ENCODE measurements at regions of chr9 and their contacts with region 1.

Region 1: DNA sequence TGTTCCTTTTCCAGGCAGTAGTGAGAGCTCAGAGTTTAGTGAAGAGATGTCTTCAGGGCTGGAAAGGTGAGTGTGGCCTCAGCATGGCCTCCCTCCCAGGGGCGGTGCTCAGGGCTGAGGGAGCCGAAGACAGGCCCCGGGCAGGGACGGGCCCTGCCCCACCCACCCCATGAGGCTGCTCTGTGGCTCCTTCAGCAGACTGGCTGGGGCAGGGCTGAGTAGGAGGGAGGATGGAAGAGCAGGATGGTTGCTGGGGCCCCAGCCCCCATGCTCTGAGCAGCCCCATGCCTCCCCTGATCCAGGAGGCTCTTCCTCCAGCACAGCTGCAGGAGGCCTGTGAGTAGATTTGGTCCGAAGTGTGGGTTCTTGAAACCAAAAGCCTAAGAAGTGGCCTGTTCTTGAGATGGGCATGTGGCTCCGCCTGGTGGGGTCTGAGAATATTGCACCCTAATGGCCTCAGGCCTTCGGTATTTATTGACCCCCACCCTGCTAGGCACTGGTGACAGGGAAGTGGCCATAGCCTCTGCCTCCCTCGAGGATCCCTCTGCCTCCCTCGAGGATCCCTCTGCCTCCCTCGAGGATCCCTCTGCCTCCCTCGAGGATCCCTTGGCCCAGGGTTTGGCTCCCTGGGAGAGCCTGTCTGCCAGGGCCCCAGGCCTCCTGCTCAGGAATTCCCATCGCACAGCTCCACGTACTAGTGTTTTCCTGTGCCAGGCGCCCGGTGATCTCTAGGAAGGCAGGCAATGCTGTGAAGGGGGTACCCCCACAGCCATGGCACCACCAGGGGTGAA is 65.4 kb upstream of the GARNL3 start:
- DNase-seq: peak; percentile 81
- ATAC-seq: peak; percentile 66 to 81

Region 2: DNA sequence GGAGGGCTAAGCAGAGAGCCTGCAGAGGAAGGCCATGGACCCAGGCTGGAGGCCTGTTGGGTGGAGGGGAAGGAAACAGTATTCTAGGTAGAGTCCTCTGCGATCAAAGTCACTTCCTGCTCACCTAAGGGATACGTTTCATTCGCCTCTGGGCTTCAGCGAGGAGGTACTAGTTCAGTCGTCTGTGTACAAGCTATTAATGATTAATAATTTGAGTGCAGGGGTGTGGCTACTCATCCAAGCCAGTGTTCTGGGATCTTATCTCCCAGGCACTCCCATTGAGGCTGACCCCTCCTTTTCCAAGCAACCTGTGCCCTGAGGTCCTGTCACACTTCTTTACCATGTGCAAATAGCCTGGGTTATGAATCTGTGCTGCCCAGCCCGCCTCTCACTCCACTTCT is 259.4 kb before region 1 on chr9:
- intact Hi-C with region 1: loop called (anchors 1 to 2 kb)
- DNase-seq: no peak
- ATAC-seq: no peak

Region 3: DNA sequence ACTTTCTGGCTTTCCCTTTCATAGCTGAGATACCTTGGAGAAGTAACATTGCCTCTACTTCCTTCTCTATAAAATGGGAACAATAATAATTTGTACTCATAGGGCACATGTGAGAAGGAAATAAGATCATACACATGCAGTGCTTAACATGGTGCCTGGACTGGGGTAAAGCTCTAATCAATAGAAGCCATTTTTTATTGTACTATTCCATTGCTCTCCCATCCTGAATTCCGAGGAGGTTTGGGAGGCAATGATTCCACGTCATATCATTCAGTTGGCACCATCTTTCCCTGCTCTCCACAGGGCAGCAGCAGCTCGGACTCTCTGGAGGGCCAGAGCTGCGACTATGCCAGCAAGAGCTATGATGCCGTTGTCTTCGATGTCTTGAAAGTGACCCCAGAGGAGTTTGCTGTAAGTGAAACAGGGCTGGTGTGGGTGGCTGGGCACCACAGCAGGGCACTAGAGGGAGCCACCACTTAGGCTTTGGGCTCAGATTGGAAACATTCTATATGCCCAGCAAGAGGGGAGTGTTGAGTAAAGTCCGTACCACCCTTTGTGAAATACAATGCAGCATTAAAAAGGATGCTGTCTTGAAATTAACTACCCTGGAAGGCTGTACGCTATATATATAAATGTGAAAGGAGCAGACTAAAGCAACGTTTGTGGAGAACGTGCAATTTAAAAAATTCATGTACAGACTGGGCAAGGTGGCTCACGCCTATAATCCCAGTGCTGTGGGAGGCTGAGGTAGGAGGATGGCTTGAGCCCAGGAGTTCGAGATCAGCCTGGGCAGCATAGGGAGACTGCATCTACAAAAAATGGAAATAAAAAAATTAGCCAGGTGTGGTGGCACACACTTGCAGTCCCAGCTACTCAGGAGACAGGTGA is 233.4 kb before region 1 on chr9:
- intact Hi-C with region 1: loop called in 1 of 2 experiments (anchors 5 kb)
- DNase-seq: peak; percentile 41
- ATAC-seq: peak; percentile 82 to 89

Region 4: GRCh38 chr9:127283917-127284316 is 84.7 kb after region 1 on chr9:
- intact Hi-C with region 1: no loop called
- DNase-seq: peak; percentile 32
- ATAC-seq: no peak

Region 5: GRCh38 chr9:127968036-127968435 is 768.8 kb after region 1 on chr9:
- intact Hi-C with region 1: no loop called
- DNase-seq: no peak
- ATAC-seq: no peak